CD4-positive, alpha-beta T cell (primary cell): ENCODE measurements at regions of chr11 and their contacts with region 1.

Region 1: DNA sequence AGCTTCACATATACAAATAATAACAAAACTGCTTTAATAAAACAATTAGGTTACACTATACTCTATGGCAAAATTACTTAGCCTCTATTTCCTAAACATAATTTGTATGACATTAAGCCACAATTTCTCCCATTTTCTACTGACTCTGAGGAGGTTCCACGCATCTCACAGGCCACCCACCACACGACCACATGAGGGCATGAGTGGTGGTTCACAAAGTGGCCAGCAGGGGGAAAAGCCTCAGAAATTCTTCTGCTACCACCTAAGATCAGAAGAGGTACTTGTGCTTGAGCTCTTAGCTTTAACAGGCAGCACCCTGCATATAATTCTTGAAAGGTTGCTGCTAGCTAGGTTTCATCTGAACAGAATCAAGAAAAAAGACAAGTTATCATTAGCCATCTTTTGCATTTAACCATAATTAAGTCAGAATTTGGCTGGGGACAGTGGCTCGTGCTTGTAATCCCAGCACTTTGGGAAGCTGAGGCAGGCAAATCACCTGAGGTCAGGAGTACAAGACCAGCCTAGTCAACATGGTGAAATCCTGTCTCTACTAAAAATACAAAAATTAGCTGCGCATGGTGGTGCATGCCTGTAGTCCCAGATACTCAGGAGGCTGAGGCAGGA is 7.7 kb downstream of the LPXN start:
- DNase-seq: peak; percentile 61 to 90 (median 75)
- ATAC-seq: peak; percentile 98
- H3K4me3 ChIP-seq: no peak overlapping the region
- H3K4me3 Mint-ChIP-seq: peak overlapping the region; percentile 65
- H3K27ac ChIP-seq: no peak overlapping the region
- H3K27ac Mint-ChIP-seq: peak overlapping the region; percentile 57
- H3K4me1 ChIP-seq: peaks cover 49% of the 10 kb centered on the region
- H3K4me1 Mint-ChIP-seq: peaks cover 64% of the 10 kb centered on the region
- H3K27me3 ChIP-seq: no peaks in the 10 kb centered on the region
- H3K27me3 Mint-ChIP-seq: no peaks in the 10 kb centered on the region
- CTCF ChIP-seq: peak; percentile 81

Region 2: GRCh38 chr11:58524232-58525036 is 43.6 kb before region 1 on chr11:
- CTCF ChIA-PET with region 1: interaction called, 13 read pairs
- POLR2A ChIA-PET with region 1: interaction called, 9 read pairs
- intact Hi-C with region 1: loop called in 1 of 2 experiments (anchors 5 kb)
- DNase-seq: peak in 13 of 14 experiments; percentile 16 to 84 (median 35)
- ATAC-seq: peak; percentile 65
- H3K4me3 ChIP-seq: peak overlapping the region; percentile 39
- H3K4me3 Mint-ChIP-seq: peak overlapping the region; percentile 63
- H3K27ac ChIP-seq: peak overlapping the region; percentile 50 to 83
- H3K27ac Mint-ChIP-seq: peak overlapping the region; percentile 95
- H3K4me1 ChIP-seq: peaks cover 17% of the 10 kb centered on the region
- H3K4me1 Mint-ChIP-seq: peaks cover 78% of the 10 kb centered on the region
- H3K27me3 ChIP-seq: no peaks in the 10 kb centered on the region
- H3K27me3 Mint-ChIP-seq: no peaks in the 10 kb centered on the region
- CTCF ChIP-seq: peak; percentile 93

Region 3: GRCh38 chr11:58586998-58587397 is 19.0 kb after region 1 on chr11:
- CTCF ChIA-PET with region 1: interaction called, 15 read pairs
- POLR2A ChIA-PET with region 1: interaction called, 3 read pairs
- intact Hi-C with region 1: no loop called
- DNase-seq: no peak
- ATAC-seq: no peak
- H3K4me3 ChIP-seq: no peak overlapping the region
- H3K4me3 Mint-ChIP-seq: no peak overlapping the region
- H3K27ac ChIP-seq: no peak overlapping the region
- H3K27ac Mint-ChIP-seq: no peak overlapping the region
- H3K4me1 ChIP-seq: no peaks in the 10 kb centered on the region
- H3K4me1 Mint-ChIP-seq: peaks cover 70% of the 10 kb centered on the region
- H3K27me3 ChIP-seq: no peaks in the 10 kb centered on the region
- H3K27me3 Mint-ChIP-seq: no peaks in the 10 kb centered on the region
- CTCF ChIP-seq: no peak

Region 4: DNA sequence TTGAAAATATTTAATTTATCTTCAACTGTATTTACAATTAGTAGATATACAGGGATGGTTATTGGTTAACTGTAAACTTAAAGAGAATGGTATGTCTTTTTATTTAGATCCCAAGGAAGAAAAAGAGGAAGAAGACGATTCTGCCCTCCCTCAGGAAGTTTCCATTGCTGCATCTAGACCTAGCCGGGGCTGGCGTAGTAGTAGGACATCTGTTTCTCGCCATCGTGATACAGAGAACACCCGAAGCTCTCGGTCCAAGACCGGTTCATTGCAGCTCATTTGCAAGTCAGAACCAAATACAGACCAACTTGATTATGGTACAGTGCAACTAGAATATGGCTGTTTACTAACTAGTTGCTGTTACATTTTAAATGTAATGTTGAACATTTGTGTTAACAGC is 41.7 kb after region 1 on chr11:
- CTCF ChIA-PET with region 1: interaction called, 17 read pairs
- POLR2A ChIA-PET with region 1: interaction called, 3 read pairs
- intact Hi-C with region 1: loop called in 1 of 2 experiments (anchors 5 kb)
- DNase-seq: no peak
- ATAC-seq: no peak
- H3K4me3 ChIP-seq: no peak overlapping the region
- H3K4me3 Mint-ChIP-seq: no peak overlapping the region
- H3K27ac ChIP-seq: no peak overlapping the region
- H3K27ac Mint-ChIP-seq: no peak overlapping the region
- H3K4me1 ChIP-seq: peaks cover 4% of the 10 kb centered on the region
- H3K4me1 Mint-ChIP-seq: peaks cover 44% of the 10 kb centered on the region
- H3K27me3 ChIP-seq: no peaks in the 10 kb centered on the region
- H3K27me3 Mint-ChIP-seq: no peaks in the 10 kb centered on the region
- CTCF ChIP-seq: no peak

Region 5: GRCh38 chr11:58629857-58630256 is 61.9 kb after region 1 on chr11:
- CTCF ChIA-PET with region 1: interaction called, 28 read pairs
- POLR2A ChIA-PET with region 1: interaction called, 11 read pairs
- intact Hi-C with region 1: loop called in 1 of 2 experiments (anchors 5 kb)
- DNase-seq: peak in 5 of 14 experiments; percentile 3 to 63 (median 41)
- ATAC-seq: peak; percentile 56
- H3K4me3 ChIP-seq: no peak overlapping the region
- H3K4me3 Mint-ChIP-seq: no peak overlapping the region
- H3K27ac ChIP-seq: no peak overlapping the region
- H3K27ac Mint-ChIP-seq: peak overlapping the region; percentile 61
- H3K4me1 ChIP-seq: no peaks in the 10 kb centered on the region
- H3K4me1 Mint-ChIP-seq: peaks cover 5% of the 10 kb centered on the region
- H3K27me3 ChIP-seq: no peaks in the 10 kb centered on the region
- H3K27me3 Mint-ChIP-seq: no peaks in the 10 kb centered on the region
- CTCF ChIP-seq: peak; percentile 54

Region 6: DNA sequence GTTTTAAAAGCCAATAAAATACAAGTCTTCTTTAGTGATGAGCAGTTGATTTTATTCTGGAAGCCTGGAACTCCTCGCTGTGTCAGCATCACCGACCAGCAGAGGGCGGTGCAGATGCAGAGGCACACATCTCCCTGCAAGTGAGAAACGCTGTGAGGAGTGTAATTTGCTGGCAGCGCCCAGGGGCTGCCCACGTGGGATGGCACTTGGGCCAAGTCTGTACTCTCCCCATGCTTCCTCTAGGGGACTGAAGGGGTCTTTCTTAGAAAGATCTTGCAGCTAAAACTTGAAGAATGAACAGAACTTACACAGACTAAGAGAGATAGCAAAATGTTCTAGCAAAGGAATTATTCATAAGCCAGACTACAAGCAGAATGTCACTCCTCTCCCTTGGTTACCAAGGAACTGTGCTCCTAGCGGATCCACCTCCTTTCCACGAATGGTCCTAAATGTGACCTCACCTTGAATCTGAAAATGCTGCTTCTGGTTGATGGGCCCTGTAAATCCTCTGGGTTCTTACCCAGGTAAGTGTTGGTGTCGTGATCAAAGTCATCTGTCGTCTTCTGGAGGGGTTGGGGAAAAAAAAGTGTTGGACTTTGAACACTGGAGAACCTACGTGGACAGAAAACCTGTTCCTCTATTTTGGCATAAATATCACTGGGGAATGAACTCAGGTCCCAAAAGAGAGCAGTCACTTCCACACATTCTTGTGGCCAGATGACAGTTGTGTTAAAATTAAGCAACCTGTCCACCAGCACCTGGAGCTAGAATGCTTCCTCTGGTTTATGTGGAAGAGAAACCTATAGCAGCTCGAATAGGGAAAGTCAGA is 86.3 kb after region 1 on chr11:
- CTCF ChIA-PET with region 1: no interaction called
- POLR2A ChIA-PET with region 1: no interaction called
- intact Hi-C with region 1: no loop called
- DNase-seq: peak; percentile 64 to 86 (median 70)
- ATAC-seq: peak; percentile 99
- H3K4me3 ChIP-seq: no peak overlapping the region
- H3K4me3 Mint-ChIP-seq: no peak overlapping the region
- H3K27ac ChIP-seq: no peak overlapping the region
- H3K27ac Mint-ChIP-seq: no peak overlapping the region
- H3K4me1 ChIP-seq: peaks cover 3% of the 10 kb centered on the region
- H3K4me1 Mint-ChIP-seq: peaks cover 7% of the 10 kb centered on the region
- H3K27me3 ChIP-seq: no peaks in the 10 kb centered on the region
- H3K27me3 Mint-ChIP-seq: no peaks in the 10 kb centered on the region
- CTCF ChIP-seq: peak; percentile 96